Right ventricle myocardium inferior (tissue), 1 donor: ENCODE measurements at regions of chr20 and their contacts with region 1.

Region 1: DNA sequence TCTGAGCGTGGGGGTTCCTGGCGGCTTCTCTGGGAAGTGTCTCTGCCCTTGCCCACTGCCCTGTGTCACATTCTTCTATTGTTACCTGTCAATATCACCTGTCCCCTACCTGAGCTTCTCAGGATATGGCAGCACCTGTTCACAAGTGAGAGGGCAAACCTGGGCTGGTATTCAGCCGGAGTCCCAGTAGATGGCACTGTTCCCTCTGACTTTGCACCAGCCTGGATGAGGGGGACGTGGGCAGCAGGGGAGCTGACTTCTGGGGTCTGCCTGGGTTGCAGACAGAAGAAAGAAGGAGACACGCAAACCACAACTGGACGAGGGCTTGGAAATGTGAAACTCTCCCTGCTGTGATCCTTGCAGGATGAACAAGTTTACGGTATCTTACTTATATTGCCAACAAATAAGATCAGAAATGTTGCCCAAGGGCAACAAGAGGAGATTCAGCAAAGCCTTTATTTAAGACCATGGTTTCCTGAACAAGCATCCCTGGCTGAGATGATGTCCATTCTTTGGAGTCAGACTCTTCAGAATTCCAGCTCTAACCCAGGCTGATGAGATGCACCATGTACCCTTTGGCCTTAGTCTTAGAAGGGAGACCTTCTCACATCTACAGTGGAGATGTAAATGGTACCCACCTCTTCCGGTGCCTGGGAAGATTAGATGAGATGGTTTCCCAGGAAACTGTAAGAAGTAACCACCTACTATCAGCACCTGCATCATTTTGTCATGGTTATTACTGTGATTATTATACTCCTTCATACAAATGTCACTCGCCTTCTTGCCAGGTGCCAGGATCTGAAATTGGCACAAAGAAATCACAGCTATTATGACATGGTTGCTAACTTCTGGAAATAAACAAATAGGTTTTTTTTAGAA is 400.0 kb upstream of the CDH4 start:
- DNase-seq: no peak
- ATAC-seq: no peak

Region 2: DNA sequence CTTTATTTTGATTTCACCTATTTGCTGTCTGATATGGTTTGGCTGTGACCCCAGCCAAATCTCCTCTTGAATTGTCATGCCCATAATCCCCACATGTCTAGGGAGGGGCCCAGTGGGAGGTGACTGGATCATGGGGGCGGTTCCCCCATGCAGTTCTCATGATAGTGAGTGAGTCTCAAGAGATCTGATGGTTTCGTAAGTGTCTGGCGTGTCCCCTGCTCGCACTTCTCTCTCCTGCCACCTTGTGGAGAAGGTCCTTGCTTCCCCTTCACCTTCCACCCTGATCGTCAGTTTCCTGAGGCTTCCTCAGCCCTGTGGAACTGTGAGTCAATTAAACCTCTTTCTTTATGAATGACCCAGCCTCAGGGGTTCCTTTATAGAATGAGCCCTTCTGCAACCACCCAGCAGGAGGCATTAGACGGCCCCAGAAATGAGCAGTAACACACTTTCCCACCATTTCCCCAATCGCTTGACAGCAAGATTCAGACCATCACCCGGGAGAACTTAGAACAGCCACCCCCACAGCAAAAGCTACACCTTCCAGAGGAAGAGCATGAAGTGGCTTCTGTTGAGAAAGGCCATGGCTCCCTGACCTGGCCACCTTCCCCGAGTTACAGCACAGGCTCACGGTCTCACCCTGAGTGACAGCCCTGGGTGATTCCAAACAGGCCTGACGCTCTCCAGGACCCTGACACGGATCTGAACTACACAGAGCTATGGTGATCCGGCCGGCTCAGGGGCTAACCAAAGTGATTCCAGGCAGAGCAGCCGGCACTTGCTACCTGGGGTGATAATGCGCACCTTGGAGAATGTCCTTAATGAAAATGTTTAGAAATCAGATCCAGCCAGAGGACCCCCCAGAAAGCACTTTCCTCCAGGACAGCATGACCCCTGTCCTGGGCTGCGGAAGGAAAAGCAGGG is 268.8 kb after region 1 on chr20:
- intact Hi-C with region 1: loop called (anchors 5 kb)
- DNase-seq: no peak
- ATAC-seq: peak; percentile 67